PC-9 (cell line): ENCODE measurements at regions of chr4 and their contacts with region 1.

Region 1: DNA sequence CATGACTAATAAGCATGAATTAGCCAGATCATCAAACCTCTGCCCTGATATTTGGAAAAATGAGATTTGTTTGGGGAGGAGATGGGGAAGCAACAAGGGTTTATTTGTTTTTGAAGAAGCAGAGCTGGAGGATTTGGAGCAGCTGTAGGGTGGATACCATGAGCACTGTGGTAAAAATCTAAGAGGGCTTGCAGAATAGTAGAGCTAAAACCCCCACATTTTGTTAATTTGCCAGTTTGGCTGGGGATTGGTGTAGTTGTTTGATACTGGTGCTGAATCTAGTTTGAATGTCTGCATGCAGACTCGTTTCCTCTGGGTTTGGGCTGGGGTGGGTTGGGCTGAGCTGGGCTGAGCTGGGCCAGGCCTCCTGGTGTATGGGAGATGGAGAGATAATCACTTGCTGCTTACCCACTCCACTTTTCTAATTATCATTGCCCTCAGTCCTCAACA is 43.7 kb downstream of the SMAD1 start:
- DNase-seq: no peak
- H3K4me3 ChIP-seq: no peak overlapping the region
- H3K27ac ChIP-seq: no peak overlapping the region
- H3K4me1 ChIP-seq: no peaks in the 10 kb centered on the region
- H3K27me3 ChIP-seq: no peaks in the 10 kb centered on the region
- CTCF ChIP-seq: no peak

Region 2: DNA sequence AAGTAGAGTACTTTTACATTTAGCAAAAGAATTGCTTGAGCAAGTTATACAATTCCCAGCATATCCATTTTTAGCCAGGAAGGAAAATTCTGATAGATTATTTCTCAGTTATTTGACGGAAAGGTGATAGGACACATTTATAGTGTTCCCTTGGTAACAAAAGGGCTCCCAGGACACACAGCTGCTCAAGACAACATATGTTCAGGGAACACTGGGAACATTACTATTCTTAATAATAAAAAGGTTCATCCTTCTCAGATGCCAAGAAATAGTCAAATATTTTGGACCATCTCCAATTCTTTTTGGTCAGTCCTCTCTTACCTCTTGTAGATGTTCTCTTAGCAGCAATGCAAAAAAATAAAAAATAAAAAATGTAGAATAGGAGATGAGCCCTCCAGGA is 110.5 kb before region 1 on chr4:
- CTCF ChIA-PET with region 1: no interaction called
- POLR2A ChIA-PET with region 1: no interaction called
- intact Hi-C with region 1: no loop called
- DNase-seq: no peak
- H3K4me3 ChIP-seq: no peak overlapping the region
- H3K27ac ChIP-seq: no peak overlapping the region
- H3K4me1 ChIP-seq: no peaks in the 10 kb centered on the region
- H3K27me3 ChIP-seq: no peaks in the 10 kb centered on the region
- CTCF ChIP-seq: no peak

Region 3: GRCh38 chr4:145851511-145852201 is 326.3 kb after region 1 on chr4:
- CTCF ChIA-PET with region 1: no interaction called
- POLR2A ChIA-PET with region 1: interaction called, 12 read pairs
- intact Hi-C with region 1: no loop called
- DNase-seq: no peak
- H3K4me3 ChIP-seq: no peak overlapping the region
- H3K27ac ChIP-seq: no peak overlapping the region
- H3K4me1 ChIP-seq: no peaks in the 10 kb centered on the region
- H3K27me3 ChIP-seq: no peaks in the 10 kb centered on the region
- CTCF ChIP-seq: no peak

Region 4: DNA sequence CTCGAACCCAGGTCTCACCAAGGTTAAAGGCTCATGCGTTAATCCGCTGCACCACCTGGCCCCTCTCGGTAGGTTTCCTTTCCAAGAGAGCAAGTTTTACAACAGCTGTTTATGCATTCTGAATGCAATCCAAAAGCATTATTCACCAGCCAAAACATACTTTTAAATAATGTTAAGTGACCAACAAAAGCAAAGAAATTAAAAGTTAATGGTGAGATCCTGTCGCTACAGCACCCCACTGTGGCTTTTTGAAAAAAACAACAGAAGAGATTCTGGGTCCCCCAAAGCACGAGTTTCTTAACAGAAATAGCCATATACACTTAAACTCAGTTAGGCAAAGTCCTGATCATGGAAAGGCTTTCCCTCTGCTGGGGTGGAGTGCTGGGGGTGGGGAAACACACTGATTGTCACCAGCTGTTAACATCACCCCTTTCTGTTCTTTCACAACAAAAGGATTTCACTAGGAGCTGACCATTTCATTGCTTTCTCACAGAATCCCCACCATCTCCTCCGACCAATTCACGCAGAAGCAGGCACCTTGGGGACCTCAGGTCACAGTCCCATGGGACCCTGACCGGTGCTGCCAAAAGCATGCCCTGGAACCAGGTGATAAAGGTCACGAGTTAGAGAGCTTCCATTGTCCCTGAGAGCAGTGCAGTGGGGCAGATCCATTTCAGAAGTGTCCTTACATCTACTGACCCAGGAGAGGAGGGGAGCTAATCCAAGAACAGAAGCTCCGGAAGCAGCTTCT is 362.1 kb after region 1 on chr4:
- CTCF ChIA-PET with region 1: no interaction called
- POLR2A ChIA-PET with region 1: no interaction called
- intact Hi-C with region 1: no loop called
- DNase-seq: no peak
- H3K4me3 ChIP-seq: no peak overlapping the region
- H3K27ac ChIP-seq: no peak overlapping the region
- H3K4me1 ChIP-seq: no peaks in the 10 kb centered on the region
- H3K27me3 ChIP-seq: no peaks in the 10 kb centered on the region
- CTCF ChIP-seq: no peak

Region 5: GRCh38 chr4:146211440-146211839 is 686.1 kb after region 1 on chr4:
- CTCF ChIA-PET with region 1: no interaction called
- POLR2A ChIA-PET with region 1: no interaction called
- intact Hi-C with region 1: no loop called
- DNase-seq: no peak
- H3K4me3 ChIP-seq: no peak overlapping the region
- H3K27ac ChIP-seq: no peak overlapping the region
- H3K4me1 ChIP-seq: no peaks in the 10 kb centered on the region
- H3K27me3 ChIP-seq: no peaks in the 10 kb centered on the region
- CTCF ChIP-seq: no peak